Activated T-helper 1 cell treated with anti-CD3 and anti-CD28 coated beads, Interleukin-12 subunit alpha, Interleukin-12 subunit beta, Interleukin-2, Interleukin-4 antibody, amounts not matched to agents 30 ng/mL and 10 ng/mL and 1 ng/mL, durations not matched to agents 14 hours and 24 hours and 36 hours (primary cell): ENCODE measurements at regions of chr2 and their contacts with region 1.

Region 1: DNA sequence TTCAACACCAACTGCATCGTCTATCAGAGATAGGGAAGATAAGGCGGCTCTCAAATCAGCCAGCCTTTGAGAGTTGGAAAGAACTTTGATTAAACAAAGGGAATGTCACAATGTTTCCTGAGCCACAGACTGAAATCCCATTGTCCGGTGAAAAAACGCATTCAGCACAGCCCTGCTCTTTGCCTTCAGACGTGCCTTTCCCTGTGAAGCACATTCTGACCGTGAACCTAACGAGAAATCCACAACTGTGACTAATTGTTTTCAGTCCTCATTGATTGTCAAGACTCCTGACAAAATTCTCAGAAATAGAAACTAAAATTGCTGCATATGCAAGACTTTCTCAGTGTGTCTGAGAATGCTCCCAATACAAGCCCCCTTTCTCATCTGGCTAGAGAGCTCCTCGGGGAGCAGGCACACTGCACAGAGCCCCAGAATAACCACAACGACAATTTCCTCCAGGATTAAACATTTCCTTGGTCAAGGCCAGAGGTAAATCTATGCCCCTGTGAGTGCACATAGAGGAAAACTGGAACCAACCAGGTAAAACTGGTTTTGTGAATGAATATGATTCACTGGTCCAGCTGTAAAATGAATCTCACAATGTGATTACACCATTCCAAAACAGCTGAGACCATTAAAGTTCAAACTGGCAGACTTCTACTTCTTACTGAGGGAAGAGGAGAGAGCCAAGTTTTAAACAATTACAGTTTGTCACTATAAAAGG is 561.9 kb upstream of the ID2 start:
- DNase-seq: no peak
- H3K4me3 Mint-ChIP-seq: peak overlapping the region; percentile 30
- H3K27ac Mint-ChIP-seq: peak overlapping the region; percentile 77
- H3K4me1 Mint-ChIP-seq: peaks cover 30% of the 10 kb centered on the region
- H3K27me3 Mint-ChIP-seq: peaks cover 4% of the 10 kb centered on the region

Region 2: DNA sequence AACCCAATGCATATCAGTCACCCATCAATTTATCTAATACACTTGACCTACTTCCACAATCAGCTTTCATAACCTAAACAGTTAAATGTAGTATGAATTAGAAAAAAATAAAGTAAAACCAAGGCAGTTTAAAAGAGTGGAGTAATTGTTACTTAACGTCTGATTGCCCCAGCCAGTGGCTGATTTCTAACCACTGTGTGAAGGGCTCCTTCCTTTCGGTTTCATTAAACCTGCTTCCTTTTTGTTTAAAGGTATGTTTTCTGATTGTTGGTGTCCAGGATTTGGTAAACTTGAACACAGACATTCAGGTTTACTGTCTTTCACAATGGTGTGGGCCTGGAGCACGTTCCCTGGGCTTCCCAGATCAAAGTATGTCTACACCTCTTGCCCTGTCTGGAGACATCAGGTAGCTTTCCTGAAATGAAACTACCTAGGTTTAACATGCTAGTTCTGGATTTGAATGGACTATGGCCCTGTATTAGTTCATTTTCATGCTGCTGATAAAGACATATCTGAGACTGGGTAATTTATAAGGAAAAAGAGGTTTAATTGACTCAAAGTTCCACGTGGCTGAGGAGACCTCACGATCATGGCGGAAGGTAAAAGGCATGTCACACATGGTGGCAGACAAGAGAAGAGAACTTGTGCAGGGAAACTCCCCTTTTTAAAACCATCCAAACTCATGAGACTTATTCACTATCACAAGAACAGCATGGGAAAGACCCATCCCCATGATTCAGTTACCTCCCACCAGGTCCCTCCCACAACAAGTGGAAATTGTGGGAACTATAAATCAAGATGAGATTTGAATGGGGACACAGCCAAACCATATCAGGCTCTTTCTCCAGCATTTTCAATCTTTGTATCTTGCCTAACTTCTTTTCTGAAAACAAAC is 43.2 kb before region 1 on chr2:
- intact Hi-C with region 1: loop called (anchors 5 kb)
- DNase-seq: no peak
- H3K4me3 Mint-ChIP-seq: no peak overlapping the region
- H3K27ac Mint-ChIP-seq: peak overlapping the region; percentile 27
- H3K4me1 Mint-ChIP-seq: peaks cover 18% of the 10 kb centered on the region
- H3K27me3 Mint-ChIP-seq: no peaks in the 10 kb centered on the region

Region 3: GRCh38 chr2:8090748-8091700 is 28.9 kb before region 1 on chr2:
- intact Hi-C with region 1: no loop called
- DNase-seq: peak; percentile 22
- H3K4me3 Mint-ChIP-seq: no peak overlapping the region
- H3K27ac Mint-ChIP-seq: no peak overlapping the region
- H3K4me1 Mint-ChIP-seq: peaks cover under 1% of the 10 kb centered on the region
- H3K27me3 Mint-ChIP-seq: no peaks in the 10 kb centered on the region

Region 4: GRCh38 chr2:8169443-8169842 is 49.5 kb after region 1 on chr2:
- intact Hi-C with region 1: no loop called
- DNase-seq: no peak
- H3K4me3 Mint-ChIP-seq: no peak overlapping the region
- H3K27ac Mint-ChIP-seq: no peak overlapping the region
- H3K4me1 Mint-ChIP-seq: peaks cover 13% of the 10 kb centered on the region
- H3K27me3 Mint-ChIP-seq: no peaks in the 10 kb centered on the region

Region 5: DNA sequence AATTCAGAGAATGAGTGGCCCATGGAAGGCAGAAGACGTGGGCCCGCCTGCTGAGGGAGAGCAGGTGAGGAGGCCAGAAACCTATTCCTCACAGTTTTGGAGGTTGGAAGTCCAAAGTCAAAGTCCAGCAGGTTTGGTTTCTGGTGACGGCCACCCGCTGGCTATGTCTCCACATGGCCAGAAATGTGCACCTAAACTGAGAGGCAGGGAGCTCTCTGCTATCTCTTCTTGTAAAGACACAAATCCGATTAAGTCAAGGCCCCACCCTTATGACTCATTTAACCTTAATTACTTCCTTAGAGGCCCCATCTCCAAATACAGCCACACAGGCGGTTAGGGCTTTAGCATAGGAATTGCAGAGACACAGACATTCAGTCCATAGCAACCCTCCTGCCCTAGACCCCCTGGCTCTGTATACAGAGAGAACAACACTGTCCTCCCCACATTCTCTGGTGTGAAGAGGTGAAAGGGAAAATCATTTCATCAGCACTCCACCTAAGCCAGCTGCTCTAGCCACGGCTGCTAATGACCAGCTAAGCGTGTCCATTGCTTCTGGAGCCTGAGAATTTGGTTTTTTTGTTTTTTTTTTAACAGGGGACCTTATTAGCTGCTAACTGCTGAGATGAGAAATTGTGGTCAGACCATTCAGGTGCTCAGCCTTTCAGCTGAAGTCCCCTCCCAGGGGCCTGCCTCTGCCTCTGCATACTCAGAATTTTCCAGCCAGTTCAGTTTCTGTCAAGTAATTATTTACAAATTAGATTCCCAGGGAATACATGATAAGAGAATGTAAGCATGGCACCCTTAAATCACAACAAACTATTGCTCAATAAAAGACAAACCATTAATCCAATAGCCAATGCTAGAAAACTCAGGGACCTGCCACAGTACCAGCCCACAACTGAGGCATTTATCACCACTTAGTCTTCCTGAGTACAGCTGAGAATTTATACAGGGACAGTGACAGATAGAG is 193.2 kb after region 1 on chr2:
- intact Hi-C with region 1: no loop called
- DNase-seq: no peak
- H3K4me3 Mint-ChIP-seq: peak overlapping the region; percentile 25
- H3K27ac Mint-ChIP-seq: peak overlapping the region; percentile 24
- H3K4me1 Mint-ChIP-seq: peaks cover 60% of the 10 kb centered on the region
- H3K27me3 Mint-ChIP-seq: peaks cover 11% of the 10 kb centered on the region